Lower leg skin (tissue), 4 donors: ENCODE measurements at regions of chr16 and their contacts with region 1.

Region 1: GRCh38 chr16:71883849-71884638 is at the start of gene ZNF821:
- DNase-seq: peak; percentile 52 to 94
- H3K4me3 ChIP-seq: peak within 1 kb of the TSS; percentile 98
- CTCF ChIP-seq: no peak
- POLR2A ChIP-seq: no peak
- total RNA-seq, gene ZNF821: 13.6 to 21.0 (median 17.2) TPM

Region 2: GRCh38 chr16:71439523-71439922 is 444.5 kb before region 1 on chr16:
- intact Hi-C with region 1: no loop called
- DNase-seq: no peak
- H3K4me3 ChIP-seq: no peak overlapping the region
- CTCF ChIP-seq: no peak
- POLR2A ChIP-seq: no peak

Region 3: GRCh38 chr16:71808593-71809459 is 75.2 kb before region 1 on chr16 and contains the start of gene AP1G1:
- intact Hi-C with region 1: loop called (anchors 10 kb)
- DNase-seq: peak; percentile 95 to 98
- H3K4me3 ChIP-seq: peak within 1 kb of the TSS; percentile 96
- CTCF ChIP-seq: peak in 1 of 3 donors; percentile 57
- POLR2A ChIP-seq: peak in 1 of 2 donors; percentile 57
- total RNA-seq, gene AP1G1: 59.6 to 90.6 (median 75.9) TPM